ENCODE measurements at regions of chr18 and their contacts with region 1.

Region 1: DNA sequence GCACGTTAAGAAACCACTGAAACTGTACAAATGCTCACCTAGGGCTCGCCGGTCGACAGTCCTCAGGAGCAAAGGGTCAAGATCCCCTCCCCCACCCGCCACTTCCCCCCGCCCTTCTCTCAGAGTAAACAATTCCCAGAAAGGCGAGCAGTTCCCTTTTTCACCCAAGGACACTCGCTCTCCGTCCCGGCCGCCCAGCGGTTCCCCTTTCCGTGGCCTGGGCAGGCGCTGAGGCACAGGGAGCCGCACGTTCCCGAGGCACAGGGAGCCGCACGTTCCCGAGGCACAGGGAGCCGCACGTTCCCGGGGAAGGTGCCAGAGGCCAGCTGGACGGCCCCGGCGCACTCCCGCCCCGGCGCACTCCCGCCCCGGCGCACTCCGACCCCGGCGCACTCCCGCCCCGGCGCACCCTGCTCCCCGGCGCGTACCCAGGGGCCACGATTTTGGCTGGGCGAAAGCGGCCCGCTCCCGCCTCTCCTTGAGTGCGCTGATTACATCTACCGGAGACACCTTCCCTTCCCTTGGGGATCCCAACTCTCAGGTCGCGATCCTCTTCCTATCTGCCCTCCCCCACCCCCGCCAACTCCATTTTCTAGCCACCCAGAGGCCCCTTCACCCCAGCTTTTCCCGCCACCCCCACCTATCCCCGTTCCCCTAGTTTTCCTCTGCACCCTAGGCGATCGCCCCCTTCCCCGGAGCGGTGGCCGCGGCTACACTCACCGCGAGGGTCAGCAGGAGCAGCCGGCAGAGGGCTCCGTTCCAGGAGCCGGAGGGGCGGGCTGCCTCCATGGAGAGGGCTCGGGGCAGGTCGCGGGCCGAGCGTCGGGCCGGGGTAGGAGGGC is 817 bp downstream of the DSC2 start:
- DNase-seq: peak; percentile 63 to 91 (median 88)
- ATAC-seq: peak; percentile 86 to 92 (median 90)
- H3K4me3 ChIP-seq: peak overlapping the region; percentile 50 to 89 (median 74)
- H3K27ac ChIP-seq: peak overlapping the region; percentile 81 to 94 (median 90)
- H3K4me1 ChIP-seq: peaks cover 0 to 17% (median 0%) of the 10 kb centered on the region in 12 donors
- H3K27me3 ChIP-seq: peaks cover 0 to 3% (median 0%) of the 10 kb centered on the region in 9 donors
- CTCF ChIP-seq: peak in 1 of 12 donors; percentile 19
- POLR2A ChIP-seq: peak in 1 of 2 donors; percentile 21

Region 2: DNA sequence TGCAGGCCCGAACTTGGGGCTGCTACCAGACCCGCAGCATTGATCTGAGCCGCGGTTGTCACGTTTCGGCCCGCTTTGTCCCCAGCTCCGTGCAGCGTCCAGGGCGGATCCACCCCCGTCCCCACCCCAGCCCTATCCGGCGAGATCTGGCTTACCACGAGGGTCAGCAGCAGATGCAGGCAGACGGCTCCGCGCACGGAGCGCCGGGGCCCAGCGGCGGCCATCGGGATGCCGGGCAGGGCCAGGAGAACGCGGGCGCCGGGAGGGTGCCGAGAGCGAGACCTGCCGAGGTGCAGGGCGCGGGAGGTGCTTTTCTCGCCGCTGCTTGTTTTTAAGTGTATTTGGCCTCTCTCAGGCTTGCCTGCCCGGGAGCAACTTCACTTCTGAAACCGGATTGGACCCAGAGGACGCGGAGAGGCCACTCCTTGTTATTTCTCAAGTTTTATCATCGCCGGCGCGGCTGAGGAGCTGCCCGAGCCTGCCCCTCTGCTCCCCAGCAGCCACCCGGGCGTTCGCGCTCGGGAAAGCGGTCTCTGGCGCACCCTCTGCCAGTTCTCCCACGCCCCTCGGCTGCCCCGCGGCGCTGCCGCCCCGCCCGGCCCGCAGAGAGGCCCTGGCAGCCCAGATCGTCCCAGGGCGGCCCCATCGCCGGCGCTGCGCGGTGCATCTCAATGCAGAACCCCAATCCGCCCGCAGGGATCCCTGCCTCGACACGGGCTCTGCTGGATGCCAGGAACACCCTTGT is 58.8 kb before region 1 on chr18 and contains the start of gene DSC3:
- intact Hi-C with region 1: loop called in 1 of 10 experiments (anchors 10 kb)
- DNase-seq: peak in 1 of 5 donors; percentile 65
- ATAC-seq: peak in 3 of 4 donors; percentile 22 to 45 (median 39)
- H3K4me3 ChIP-seq: peak within 1 kb of the TSS in 11 of 12 donors; percentile 5 to 44 (median 39)
- H3K27ac ChIP-seq: no peak within 1 kb of the TSS
- H3K4me1 ChIP-seq: peaks cover 0 to 24% (median 6%) of the 10 kb centered on the region in 12 donors
- H3K27me3 ChIP-seq: peaks cover 15 to 77% (median 51%) of the 10 kb centered on the region in 9 donors
- CTCF ChIP-seq: no peak
- POLR2A ChIP-seq: no peak
- total RNA-seq, gene DSC3: 0.05 to 10.9 (median 0.13) TPM in 7 of 9 donors, not detected in the others

Region 3: GRCh38 chr18:31206787-31207381 is 105.5 kb after region 1 on chr18:
- intact Hi-C with region 1: loop called in 2 of 10 experiments (anchors 5 kb)
- DNase-seq: peak in 4 of 5 donors; percentile 43 to 70 (median 56)
- ATAC-seq: peak; percentile 73 to 95 (median 86)
- H3K4me3 ChIP-seq: peak overlapping the region in 9 of 12 donors; percentile 15 to 41 (median 30)
- H3K27ac ChIP-seq: peak overlapping the region in 9 of 12 donors; percentile 17 to 72 (median 44)
- H3K4me1 ChIP-seq: peaks cover 0 to 39% (median 0%) of the 10 kb centered on the region in 12 donors
- H3K27me3 ChIP-seq: no peaks in the 10 kb centered on the region
- CTCF ChIP-seq: peak in 2 of 12 donors; percentile 9 to 13
- POLR2A ChIP-seq: peak in 1 of 2 donors; percentile 32

Region 4: GRCh38 chr18:31241900-31242409 is 140.6 kb after region 1 on chr18:
- intact Hi-C with region 1: loop called in 3 of 10 experiments (anchors 5 to 10 kb)
- DNase-seq: no peak
- ATAC-seq: no peak
- H3K4me3 ChIP-seq: no peak overlapping the region
- H3K27ac ChIP-seq: no peak overlapping the region
- H3K4me1 ChIP-seq: peaks cover 0 to 45% (median 19%) of the 10 kb centered on the region in 12 donors
- H3K27me3 ChIP-seq: no peaks in the 10 kb centered on the region
- CTCF ChIP-seq: peak in 6 of 12 donors; percentile 12 to 38 (median 28)
- POLR2A ChIP-seq: no peak

Region 5: GRCh38 chr18:31267823-31268481 is 166.5 kb after region 1 on chr18:
- intact Hi-C with region 1: loop called in 3 of 10 experiments (anchors 5 to 10 kb)
- DNase-seq: no peak
- ATAC-seq: no peak
- H3K4me3 ChIP-seq: no peak overlapping the region
- H3K27ac ChIP-seq: no peak overlapping the region
- H3K4me1 ChIP-seq: peaks cover 0 to 18% (median 8%) of the 10 kb centered on the region in 12 donors
- H3K27me3 ChIP-seq: no peaks in the 10 kb centered on the region
- CTCF ChIP-seq: no peak
- POLR2A ChIP-seq: no peak

Region 6: GRCh38 chr18:31399306-31400032 is 298.1 kb after region 1 on chr18:
- intact Hi-C with region 1: loop called in 2 of 10 experiments (anchors 10 kb)
- DNase-seq: no peak
- ATAC-seq: no peak
- H3K4me3 ChIP-seq: no peak overlapping the region
- H3K27ac ChIP-seq: no peak overlapping the region
- H3K4me1 ChIP-seq: peaks cover 0 to 18% (median 10%) of the 10 kb centered on the region in 12 donors
- H3K27me3 ChIP-seq: no peaks in the 10 kb centered on the region
- CTCF ChIP-seq: no peak
- POLR2A ChIP-seq: no peak

Region 7: GRCh38 chr18:31506024-31506742 is 404.8 kb after region 1 on chr18:
- intact Hi-C with region 1: loop called in 5 of 10 experiments (anchors 5 to 10 kb)
- DNase-seq: no peak
- ATAC-seq: no peak
- H3K4me3 ChIP-seq: no peak overlapping the region
- H3K27ac ChIP-seq: no peak overlapping the region
- H3K4me1 ChIP-seq: peaks cover 0 to 6% (median 0%) of the 10 kb centered on the region in 12 donors
- H3K27me3 ChIP-seq: no peaks in the 10 kb centered on the region
- CTCF ChIP-seq: peak; percentile 15 to 65 (median 50)
- POLR2A ChIP-seq: no peak